CD8-positive, alpha-beta T cell (primary cell): ENCODE measurements at regions of chr4 and their contacts with region 1.

Region 1: DNA sequence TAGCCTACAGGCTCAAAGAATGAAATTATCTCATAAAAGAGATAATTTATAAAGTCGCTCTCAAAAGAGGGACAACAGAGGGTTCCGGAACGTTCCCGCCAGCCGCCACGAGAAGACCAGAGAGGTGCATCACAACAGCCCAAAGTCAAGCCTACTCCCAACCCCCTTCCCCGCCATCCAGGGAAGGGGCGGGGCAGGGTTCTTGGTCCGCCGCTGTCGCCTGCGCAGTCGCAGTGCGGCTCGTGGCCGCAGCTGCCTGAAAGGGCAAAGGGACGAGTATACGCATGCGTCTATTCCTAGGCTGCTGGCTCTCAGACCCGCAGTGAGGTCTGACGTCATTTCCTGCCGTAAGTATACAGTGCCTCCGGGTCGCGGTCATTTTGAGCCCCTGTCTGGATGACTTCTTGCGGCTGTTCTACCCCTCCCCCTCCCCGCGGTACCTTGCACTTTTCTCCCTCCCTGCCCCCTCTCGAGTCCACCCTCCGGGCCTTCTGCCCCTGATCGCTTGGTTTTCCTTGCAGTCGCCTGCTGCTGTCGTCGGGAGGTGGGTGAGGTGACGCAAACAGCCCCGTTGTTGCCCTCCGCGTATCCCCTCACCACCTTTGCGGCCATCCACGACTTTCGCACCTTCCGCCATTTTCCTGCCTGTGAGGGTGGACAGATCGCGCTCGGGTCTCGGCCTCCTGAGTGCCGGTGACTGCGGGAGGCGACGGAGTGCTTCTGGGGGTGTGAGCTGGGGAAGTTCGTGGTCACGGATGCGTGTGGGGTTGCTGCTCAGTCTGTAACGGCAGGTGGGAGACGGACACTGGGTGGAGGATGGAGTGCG is at the start of gene OCIAD1:
- DNase-seq: peak; percentile 86 to 100 (median 91)
- ATAC-seq: peak; percentile 92
- H3K4me3 ChIP-seq: peak within 1 kb of the TSS; percentile 95 to 98
- H3K4me3 Mint-ChIP-seq: peak within 1 kb of the TSS; percentile 99
- H3K27ac ChIP-seq: peak within 1 kb of the TSS; percentile 97 to 98
- H3K27ac Mint-ChIP-seq: peak within 1 kb of the TSS; percentile 100
- H3K4me1 ChIP-seq: peaks cover 24% of the 10 kb centered on the region
- H3K4me1 Mint-ChIP-seq: peaks cover 25% of the 10 kb centered on the region
- H3K27me3 ChIP-seq: no peaks in the 10 kb centered on the region
- H3K27me3 Mint-ChIP-seq: no peaks in the 10 kb centered on the region
- CTCF ChIP-seq: no peak
- total RNA-seq, gene OCIAD1: 80.0 to 83.7 TPM

Region 2: DNA sequence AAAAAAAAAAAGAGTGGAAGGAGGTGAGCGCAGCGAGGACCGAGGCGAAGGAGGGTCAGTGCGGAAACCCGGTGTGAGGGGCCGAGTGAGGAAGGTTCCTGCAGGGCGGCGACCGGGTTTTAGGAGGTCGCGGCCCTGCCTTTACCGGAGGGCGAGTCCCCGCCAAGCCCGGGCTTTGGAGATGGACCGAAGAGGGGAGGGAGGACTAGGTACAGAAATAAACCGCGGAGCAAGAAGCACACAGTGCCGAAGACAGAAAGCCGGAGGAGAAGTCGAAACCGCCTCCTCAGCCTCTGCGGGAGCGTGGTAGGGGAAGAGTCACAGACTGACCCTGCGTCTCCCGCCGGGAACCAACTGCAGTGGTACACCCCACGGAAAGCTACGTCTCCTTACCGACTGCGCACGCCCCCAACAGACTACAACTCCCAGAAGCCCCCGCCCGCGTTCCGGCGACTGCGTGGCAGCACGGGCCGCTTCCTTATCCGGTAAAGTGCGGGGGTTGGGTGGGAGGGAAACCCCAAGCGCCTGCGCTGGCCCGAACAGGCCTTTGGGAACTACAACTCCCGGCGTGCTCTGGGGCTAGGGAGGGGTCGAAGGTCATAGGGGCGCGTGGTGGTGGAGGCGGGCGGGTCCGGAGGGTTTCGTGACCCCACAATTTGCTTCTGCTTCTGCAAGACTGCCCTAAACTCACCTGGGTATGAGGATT is 916.5 kb before region 1 on chr4 and contains the start of gene NFXL1:
- CTCF ChIA-PET with region 1: no interaction called
- POLR2A ChIA-PET with region 1: no interaction called
- intact Hi-C with region 1: loop called in 1 of 2 experiments (anchors 5 kb)
- DNase-seq: peak; percentile 90 to 97 (median 96)
- ATAC-seq: peak; percentile 95
- H3K4me3 ChIP-seq: peak within 1 kb of the TSS; percentile 99 to 100
- H3K4me3 Mint-ChIP-seq: peak within 1 kb of the TSS; percentile 99
- H3K27ac ChIP-seq: peak within 1 kb of the TSS; percentile 81 to 86
- H3K27ac Mint-ChIP-seq: peak within 1 kb of the TSS; percentile 97
- H3K4me1 ChIP-seq: peaks cover 22% of the 10 kb centered on the region
- H3K4me1 Mint-ChIP-seq: peaks cover 32% of the 10 kb centered on the region
- H3K27me3 ChIP-seq: no peaks in the 10 kb centered on the region
- H3K27me3 Mint-ChIP-seq: no peaks in the 10 kb centered on the region
- CTCF ChIP-seq: no peak
- total RNA-seq, gene NFXL1: 6.5 to 8.1 TPM

Region 3: DNA sequence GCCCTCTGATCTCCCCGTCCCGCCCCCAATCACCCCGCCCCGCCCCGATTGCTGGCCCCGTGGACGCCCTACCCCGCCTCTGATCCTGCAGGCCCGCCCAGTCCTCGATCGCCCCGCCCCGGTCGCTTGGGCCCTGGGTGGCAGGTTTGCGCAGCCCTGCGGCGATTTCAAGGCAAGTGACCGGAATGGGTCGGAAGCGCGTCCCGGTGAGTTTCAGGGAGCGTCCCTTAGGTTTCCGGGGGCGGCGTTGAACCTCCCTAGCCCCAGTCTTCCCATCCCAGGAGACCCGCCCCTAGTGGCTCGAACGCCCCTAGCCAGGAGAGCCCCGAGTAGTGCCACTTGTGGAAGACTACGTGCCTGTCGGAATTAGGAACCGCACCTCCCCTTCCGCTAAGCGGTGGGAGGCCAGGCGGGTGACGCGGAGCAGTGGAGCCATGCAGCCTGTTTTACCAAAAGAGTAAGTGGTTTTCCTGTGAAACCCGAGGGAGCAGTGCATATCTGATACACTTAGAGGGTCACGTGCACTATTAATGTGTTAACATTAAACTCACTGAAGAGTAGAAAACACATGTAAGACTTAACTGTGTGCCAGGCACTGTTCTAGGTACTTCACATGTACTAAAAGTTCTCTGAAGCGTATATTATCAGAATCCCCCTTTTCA is 560.9 kb before region 1 on chr4:
- CTCF ChIA-PET with region 1: no interaction called
- POLR2A ChIA-PET with region 1: no interaction called
- intact Hi-C with region 1: loop called in 1 of 2 experiments (anchors 5 kb)
- DNase-seq: peak; percentile 74 to 89 (median 85)
- ATAC-seq: peak; percentile 88
- H3K4me3 ChIP-seq: peak overlapping the region; percentile 68 to 98
- H3K4me3 Mint-ChIP-seq: peak overlapping the region; percentile 96
- H3K27ac ChIP-seq: peak overlapping the region; percentile 47 to 60
- H3K27ac Mint-ChIP-seq: peak overlapping the region; percentile 80
- H3K4me1 ChIP-seq: peaks cover 12% of the 10 kb centered on the region
- H3K4me1 Mint-ChIP-seq: peaks cover 18% of the 10 kb centered on the region
- H3K27me3 ChIP-seq: no peaks in the 10 kb centered on the region
- H3K27me3 Mint-ChIP-seq: no peaks in the 10 kb centered on the region
- CTCF ChIP-seq: no peak

Region 4: DNA sequence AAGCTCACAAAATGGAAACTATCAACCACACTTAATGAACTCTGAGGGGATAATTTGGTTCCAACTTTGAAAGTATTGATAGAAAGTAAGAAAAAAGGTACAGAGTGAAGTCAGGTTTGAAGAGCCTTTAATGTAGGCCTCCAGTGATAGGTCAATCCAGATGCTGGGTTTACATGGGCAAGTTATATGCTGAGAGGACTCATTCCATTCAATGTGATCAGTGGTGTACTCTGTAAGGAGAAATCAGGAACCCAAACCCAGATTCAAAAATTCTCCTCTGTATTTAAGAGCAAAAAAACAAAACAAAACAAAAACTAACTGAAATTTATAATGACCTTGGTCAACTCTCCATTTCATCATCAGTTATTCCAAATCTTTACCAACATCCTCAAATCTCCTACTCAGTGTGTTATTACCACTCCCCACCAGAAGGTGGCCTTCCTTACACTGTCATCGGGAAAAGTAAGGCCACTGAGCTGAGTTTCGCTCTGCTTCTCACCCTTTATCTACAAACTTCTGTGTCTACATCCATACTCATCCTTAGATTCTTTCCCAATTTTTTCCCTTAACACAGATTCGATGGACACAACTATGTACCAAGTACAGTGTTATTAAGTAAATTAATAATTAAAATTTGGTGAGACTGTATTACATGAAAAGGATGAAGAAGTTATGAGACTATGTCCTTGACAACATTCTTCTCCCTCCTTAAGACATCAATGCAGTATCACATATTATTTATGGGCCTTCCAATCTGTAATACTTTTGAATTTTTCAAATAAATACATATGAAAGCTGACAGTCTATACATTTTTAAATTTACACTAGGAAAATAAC is 252.6 kb before region 1 on chr4:
- CTCF ChIA-PET with region 1: no interaction called
- POLR2A ChIA-PET with region 1: interaction called, 3 read pairs
- intact Hi-C with region 1: loop called (anchors 1 to 5 kb)
- DNase-seq: peak in 8 of 9 experiments; percentile 9 to 78 (median 48)
- ATAC-seq: peak; percentile 98
- H3K4me3 ChIP-seq: no peak overlapping the region
- H3K4me3 Mint-ChIP-seq: no peak overlapping the region
- H3K27ac ChIP-seq: no peak overlapping the region
- H3K27ac Mint-ChIP-seq: peak overlapping the region; percentile 7
- H3K4me1 ChIP-seq: no peaks in the 10 kb centered on the region
- H3K4me1 Mint-ChIP-seq: peaks cover 3% of the 10 kb centered on the region
- H3K27me3 ChIP-seq: no peaks in the 10 kb centered on the region
- H3K27me3 Mint-ChIP-seq: no peaks in the 10 kb centered on the region
- CTCF ChIP-seq: peak; percentile 87

Region 5: DNA sequence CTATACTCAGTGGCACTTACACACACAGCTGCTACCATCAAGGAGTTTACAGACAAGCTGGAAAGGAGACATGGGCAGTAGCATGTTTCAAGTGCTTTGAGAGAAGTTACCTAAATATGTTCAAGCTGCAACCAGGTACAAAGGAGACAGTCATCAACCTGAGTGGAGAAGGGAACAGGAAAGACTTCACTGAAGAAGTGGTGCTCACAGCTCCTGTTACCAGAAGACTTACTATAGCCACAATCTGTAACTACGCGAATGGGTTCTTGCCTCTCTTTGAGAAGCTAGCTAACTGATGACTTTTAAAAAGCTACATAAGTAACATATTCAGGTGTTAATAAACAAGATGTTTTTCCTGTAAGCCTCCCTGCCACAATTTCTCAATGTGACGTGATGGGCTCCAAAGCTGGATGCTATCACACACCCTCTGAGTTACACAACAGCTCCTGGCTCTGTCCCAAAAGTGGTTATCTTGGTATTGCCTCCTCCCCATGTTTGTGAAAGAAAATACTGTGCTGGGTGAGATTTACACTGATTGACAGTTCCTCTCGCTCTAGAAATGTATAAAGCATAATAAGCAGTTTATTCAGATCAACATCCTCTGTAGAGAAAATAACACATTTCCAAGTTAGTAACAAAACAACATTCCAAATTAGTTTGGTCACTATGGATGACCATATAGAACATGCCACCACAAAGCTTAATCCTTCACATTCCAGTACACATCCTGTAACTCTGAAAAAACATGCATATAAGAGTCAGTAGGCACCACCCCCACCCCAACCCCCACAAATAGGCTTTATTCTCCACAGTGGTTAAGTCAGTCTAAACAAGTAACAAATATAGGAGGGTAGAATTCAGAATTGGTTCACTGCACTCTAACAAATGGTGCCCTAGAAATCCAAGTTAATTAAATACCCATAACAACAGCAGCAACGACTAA is 132.6 kb before region 1 on chr4:
- CTCF ChIA-PET with region 1: no interaction called
- POLR2A ChIA-PET with region 1: no interaction called
- intact Hi-C with region 1: loop called in 1 of 2 experiments (anchors 10 kb)
- DNase-seq: peak in 3 of 9 experiments; percentile 3 to 26 (median 24)
- ATAC-seq: no peak
- H3K4me3 ChIP-seq: no peak overlapping the region
- H3K4me3 Mint-ChIP-seq: no peak overlapping the region
- H3K27ac ChIP-seq: no peak overlapping the region
- H3K27ac Mint-ChIP-seq: peak overlapping the region; percentile 55
- H3K4me1 ChIP-seq: peaks cover 27% of the 10 kb centered on the region
- H3K4me1 Mint-ChIP-seq: peaks cover 66% of the 10 kb centered on the region
- H3K27me3 ChIP-seq: no peaks in the 10 kb centered on the region
- H3K27me3 Mint-ChIP-seq: no peaks in the 10 kb centered on the region
- CTCF ChIP-seq: no peak

Region 6: DNA sequence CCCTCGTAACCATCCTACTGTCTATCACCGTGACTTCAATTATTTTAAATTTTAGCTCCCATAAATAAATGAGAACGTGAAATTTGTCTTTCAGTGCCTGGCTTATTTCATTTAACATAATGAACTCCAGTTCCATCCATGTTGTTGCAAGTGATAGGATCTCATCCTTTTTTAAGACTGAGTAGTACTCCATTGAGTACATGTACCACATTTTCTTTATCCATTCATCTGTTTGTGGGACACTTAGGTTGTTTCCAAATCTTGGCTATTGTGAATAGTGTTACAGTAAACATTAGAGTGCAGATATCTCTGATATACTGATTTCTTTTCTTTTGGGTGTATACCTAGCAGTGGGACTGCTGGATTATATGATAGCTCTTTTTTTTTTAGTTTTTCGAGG is 32.8 kb after region 1 on chr4:
- CTCF ChIA-PET with region 1: no interaction called
- POLR2A ChIA-PET with region 1: interaction called, 3 read pairs
- intact Hi-C with region 1: loop called in 1 of 2 experiments (anchors 1 kb)
- DNase-seq: no peak
- ATAC-seq: no peak
- H3K4me3 ChIP-seq: no peak overlapping the region
- H3K4me3 Mint-ChIP-seq: no peak overlapping the region
- H3K27ac ChIP-seq: no peak overlapping the region
- H3K27ac Mint-ChIP-seq: no peak overlapping the region
- H3K4me1 ChIP-seq: no peaks in the 10 kb centered on the region
- H3K4me1 Mint-ChIP-seq: no peaks in the 10 kb centered on the region
- H3K27me3 ChIP-seq: no peaks in the 10 kb centered on the region
- H3K27me3 Mint-ChIP-seq: no peaks in the 10 kb centered on the region
- CTCF ChIP-seq: no peak

Region 7: DNA sequence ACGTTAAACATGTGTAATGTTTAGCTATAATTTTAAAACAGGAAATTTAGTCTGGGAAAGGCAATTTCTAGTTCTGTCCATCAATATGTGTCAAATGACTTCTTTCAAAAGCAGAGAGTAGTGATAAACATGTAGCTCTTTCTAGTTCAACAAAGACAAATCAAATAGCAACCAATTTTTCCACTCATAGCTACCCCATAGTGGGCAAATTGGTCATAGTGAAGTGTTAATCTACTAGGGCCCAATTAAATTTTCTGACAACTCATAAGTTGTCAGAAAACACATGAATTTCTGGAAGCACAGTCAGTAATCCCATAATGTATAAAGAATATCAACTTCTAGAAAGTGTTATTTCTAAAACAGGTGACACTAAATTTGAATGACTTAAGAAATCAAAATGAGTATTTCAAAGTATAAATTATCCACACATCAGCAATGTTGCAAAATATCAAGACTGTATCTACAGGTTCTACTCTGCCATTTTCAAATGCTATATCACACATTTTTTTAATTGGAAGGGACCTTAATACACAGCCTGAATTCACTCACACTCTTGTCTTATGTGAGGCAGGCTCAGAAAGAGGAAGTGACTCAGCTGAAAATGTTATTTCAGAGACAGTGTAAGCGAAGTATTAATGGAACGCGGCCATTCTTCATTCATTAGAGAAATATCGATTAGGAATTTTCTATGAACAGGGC is 68.0 kb after region 1 on chr4:
- CTCF ChIA-PET with region 1: no interaction called
- POLR2A ChIA-PET with region 1: no interaction called
- intact Hi-C with region 1: no loop called
- DNase-seq: no peak
- ATAC-seq: no peak
- H3K4me3 ChIP-seq: no peak overlapping the region
- H3K4me3 Mint-ChIP-seq: peak overlapping the region; percentile 13
- H3K27ac ChIP-seq: no peak overlapping the region
- H3K27ac Mint-ChIP-seq: peak overlapping the region; percentile 52
- H3K4me1 ChIP-seq: peaks cover 14% of the 10 kb centered on the region
- H3K4me1 Mint-ChIP-seq: peaks cover 53% of the 10 kb centered on the region
- H3K27me3 ChIP-seq: no peaks in the 10 kb centered on the region
- H3K27me3 Mint-ChIP-seq: no peaks in the 10 kb centered on the region
- CTCF ChIP-seq: no peak

Region 8: DNA sequence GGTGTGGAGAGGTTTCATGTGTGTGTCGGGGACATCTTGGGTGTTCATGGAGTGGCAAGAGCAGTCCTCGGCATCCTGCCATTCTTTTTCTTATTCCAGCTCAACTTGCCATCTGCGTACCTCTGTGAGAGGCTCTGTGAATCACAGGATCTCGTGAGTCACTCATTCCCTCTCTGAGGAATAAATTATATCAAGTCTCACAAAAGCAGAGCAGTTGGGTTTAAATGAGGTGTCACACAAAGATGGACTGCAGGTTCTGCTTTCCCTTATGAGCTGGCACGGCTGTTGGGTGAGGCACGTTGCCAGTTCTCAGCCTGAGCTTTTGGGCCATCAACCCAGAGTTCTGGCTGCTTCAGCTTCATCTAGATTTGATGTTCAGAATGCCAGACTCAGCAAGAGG is 82.4 kb after region 1 on chr4:
- CTCF ChIA-PET with region 1: no interaction called
- POLR2A ChIA-PET with region 1: no interaction called
- intact Hi-C with region 1: no loop called
- DNase-seq: no peak
- ATAC-seq: no peak
- H3K4me3 ChIP-seq: no peak overlapping the region
- H3K4me3 Mint-ChIP-seq: no peak overlapping the region
- H3K27ac ChIP-seq: no peak overlapping the region
- H3K27ac Mint-ChIP-seq: no peak overlapping the region
- H3K4me1 ChIP-seq: no peaks in the 10 kb centered on the region
- H3K4me1 Mint-ChIP-seq: peaks cover 6% of the 10 kb centered on the region
- H3K27me3 ChIP-seq: no peaks in the 10 kb centered on the region
- H3K27me3 Mint-ChIP-seq: no peaks in the 10 kb centered on the region
- CTCF ChIP-seq: no peak

Region 9: GRCh38 chr4:48963042-48963679 is 132.2 kb after region 1 on chr4:
- CTCF ChIA-PET with region 1: no interaction called
- POLR2A ChIA-PET with region 1: no interaction called
- intact Hi-C with region 1: loop called in 1 of 2 experiments (anchors 5 kb)
- DNase-seq: peak; percentile 53 to 88 (median 75)
- ATAC-seq: peak; percentile 99
- H3K4me3 ChIP-seq: no peak overlapping the region
- H3K4me3 Mint-ChIP-seq: no peak overlapping the region
- H3K27ac ChIP-seq: no peak overlapping the region
- H3K27ac Mint-ChIP-seq: no peak overlapping the region
- H3K4me1 ChIP-seq: no peaks in the 10 kb centered on the region
- H3K4me1 Mint-ChIP-seq: peaks cover 2% of the 10 kb centered on the region
- H3K27me3 ChIP-seq: no peaks in the 10 kb centered on the region
- H3K27me3 Mint-ChIP-seq: no peaks in the 10 kb centered on the region
- CTCF ChIP-seq: peak; percentile 99